ENCODE measurements at regions of chr6 and their contacts with region 1.

Region 1: GRCh38 chr6:129448965-129449364 is 261.0 kb downstream of the ARHGAP18 start:
- DNase-seq: no peak
- H3K4me3 Mint-ChIP-seq: no peak overlapping the region
- H3K27ac Mint-ChIP-seq: no peak overlapping the region
- H3K4me1 Mint-ChIP-seq: peaks cover 54% of the 10 kb centered on the region
- H3K27me3 Mint-ChIP-seq: no peaks in the 10 kb centered on the region

Region 2: GRCh38 chr6:128569737-128570679 is 879.0 kb before region 1 on chr6:
- intact Hi-C with region 1: no loop called
- DNase-seq: no peak
- H3K4me3 Mint-ChIP-seq: no peak overlapping the region
- H3K27ac Mint-ChIP-seq: no peak overlapping the region
- H3K4me1 Mint-ChIP-seq: peaks cover 5% of the 10 kb centered on the region
- H3K27me3 Mint-ChIP-seq: peaks cover under 1% of the 10 kb centered on the region

Region 3: GRCh38 chr6:129490521-129491245 is 41.7 kb after region 1 on chr6:
- intact Hi-C with region 1: loop called (anchors 1 kb)
- DNase-seq: peak; percentile 91
- H3K4me3 Mint-ChIP-seq: peak overlapping the region; percentile 84
- H3K27ac Mint-ChIP-seq: peak overlapping the region; percentile 98
- H3K4me1 Mint-ChIP-seq: peaks cover 61% of the 10 kb centered on the region
- H3K27me3 Mint-ChIP-seq: no peaks in the 10 kb centered on the region